ENCODE measurements at regions of chr5 and their contacts with region 1.

Region 1: DNA sequence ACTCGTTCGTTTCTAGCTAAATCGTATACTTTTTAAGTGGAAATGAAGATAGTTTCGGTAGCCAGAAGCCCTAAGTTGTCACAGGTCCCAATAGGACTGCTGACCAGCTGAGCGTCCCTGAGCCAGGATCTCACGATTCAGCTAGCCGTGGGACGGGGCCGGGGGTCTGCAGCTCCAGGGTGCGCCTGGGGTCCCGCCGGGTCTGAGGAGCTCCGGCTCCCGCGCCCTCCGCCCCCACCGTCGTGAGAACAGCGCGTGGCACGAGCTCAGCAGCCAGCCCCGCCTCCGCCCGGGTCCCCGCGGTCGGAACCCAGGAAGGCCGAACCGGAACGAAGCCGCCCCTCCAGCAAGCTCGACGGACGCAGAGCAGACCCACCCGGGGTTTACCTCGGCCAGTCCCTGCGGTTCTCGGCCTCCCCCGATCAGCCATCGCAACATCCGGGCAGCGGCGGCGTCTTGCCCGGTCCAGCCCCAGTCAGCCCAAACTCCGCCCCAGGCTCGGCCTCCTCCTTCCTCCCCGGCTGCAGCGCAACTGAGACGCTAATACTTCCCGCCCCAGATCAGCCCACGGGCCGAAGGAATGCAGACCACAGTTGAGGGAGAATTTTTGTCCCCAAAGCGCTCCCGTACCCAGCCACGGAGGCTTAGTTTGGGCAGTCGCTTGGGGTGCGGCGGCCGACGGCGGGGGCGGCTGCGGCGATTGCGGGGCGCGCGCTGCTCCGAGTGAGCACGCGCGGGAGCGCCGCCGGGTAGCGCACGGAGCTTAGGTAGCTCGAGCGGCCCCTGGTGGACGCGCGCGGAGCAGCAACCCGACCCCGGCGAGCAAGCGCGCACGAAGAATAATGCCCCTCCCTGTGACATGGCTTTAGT is at the start of gene WDR41:
- DNase-seq: peak; percentile 97
- ATAC-seq: peak; percentile 98
- H3K4me3 ChIP-seq: peak within 1 kb of the TSS; percentile 81 to 84
- H3K27ac ChIP-seq: peak within 1 kb of the TSS; percentile 77 to 98
- H3K4me1 ChIP-seq: no peaks in the 10 kb centered on the region
- H3K27me3 ChIP-seq: no peaks in the 10 kb centered on the region
- total RNA-seq, gene WDR41: 53.6 to 59.7 TPM

Region 2: GRCh38 chr5:76867827-76868693 is 624.0 kb before region 1 on chr5:
- intact Hi-C with region 1: loop called in 1 of 2 experiments (anchors 5 kb)
- DNase-seq: peak in 1 of 2 donors; percentile 59
- ATAC-seq: peak; percentile 69
- H3K4me3 ChIP-seq: no peak overlapping the region
- H3K27ac ChIP-seq: no peak overlapping the region
- H3K4me1 ChIP-seq: peaks cover 0 to 1% of the 10 kb centered on the region in 2 donors
- H3K27me3 ChIP-seq: no peaks in the 10 kb centered on the region

Region 3: GRCh38 chr5:77030097-77031071 is 461.6 kb before region 1 on chr5 and contains the start of gene AGGF1:
- intact Hi-C with region 1: loop called in 1 of 2 experiments (anchors 1 kb)
- DNase-seq: peak; percentile 97
- ATAC-seq: peak; percentile 97
- H3K4me3 ChIP-seq: peak within 1 kb of the TSS; percentile 61 to 93
- H3K27ac ChIP-seq: peak within 1 kb of the TSS; percentile 58 to 79
- H3K4me1 ChIP-seq: peaks cover 0 to 2% of the 10 kb centered on the region in 2 donors
- H3K27me3 ChIP-seq: no peaks in the 10 kb centered on the region
- total RNA-seq, gene AGGF1: 14.5 to 20.6 TPM

Region 4: DNA sequence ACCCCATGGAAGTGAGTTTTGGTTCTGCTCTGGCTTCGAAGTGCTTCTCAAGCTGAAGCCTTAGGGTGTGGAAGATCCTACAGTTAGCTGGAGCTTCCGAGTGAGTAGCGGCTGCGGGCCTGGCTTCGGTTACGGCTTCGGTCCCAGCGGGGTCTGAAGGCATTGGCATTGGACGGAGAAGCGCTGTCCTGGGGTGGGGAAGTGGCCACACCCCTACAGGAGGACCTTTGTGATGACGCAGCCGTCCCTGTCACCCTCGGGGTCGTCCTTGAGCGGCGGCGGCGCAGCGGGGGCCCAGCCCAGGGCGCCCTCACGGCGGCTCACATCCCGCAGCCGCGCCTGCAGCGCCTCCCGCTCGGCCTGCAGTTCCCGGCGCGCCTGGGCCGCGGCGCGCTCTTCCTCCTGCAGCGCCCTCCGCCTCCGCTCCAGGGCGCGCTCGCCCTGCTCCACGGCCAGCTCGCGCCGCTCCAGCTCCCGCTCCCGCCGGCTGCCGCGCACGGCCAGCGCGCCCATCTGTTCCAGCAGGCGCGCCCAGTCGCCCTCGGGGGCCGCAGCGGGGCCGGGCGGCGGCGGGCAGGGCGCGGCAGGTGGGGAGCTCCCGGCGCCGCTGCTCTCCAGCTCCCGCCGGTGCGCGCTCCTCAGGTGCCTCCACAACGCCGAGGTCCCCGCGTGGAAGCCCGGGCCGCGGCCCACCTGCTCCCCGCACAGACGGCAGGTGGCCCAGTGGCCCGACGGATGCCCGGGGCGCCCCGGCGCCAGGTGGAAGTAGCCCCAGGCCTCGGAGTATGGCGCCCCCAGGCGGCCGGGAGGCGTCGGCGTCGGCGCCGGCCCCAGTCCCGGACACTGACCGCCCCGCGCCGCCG is 414.8 kb before region 1 on chr5:
- intact Hi-C with region 1: loop called in 1 of 2 experiments (anchors 10 kb)
- DNase-seq: peak; percentile 79 to 92
- ATAC-seq: peak; percentile 91
- H3K4me3 ChIP-seq: peak overlapping the region in 1 of 2 donors; percentile 40
- H3K27ac ChIP-seq: no peak overlapping the region
- H3K4me1 ChIP-seq: no peaks in the 10 kb centered on the region
- H3K27me3 ChIP-seq: peaks cover 0 to 2% of the 10 kb centered on the region in 2 donors

Region 5: DNA sequence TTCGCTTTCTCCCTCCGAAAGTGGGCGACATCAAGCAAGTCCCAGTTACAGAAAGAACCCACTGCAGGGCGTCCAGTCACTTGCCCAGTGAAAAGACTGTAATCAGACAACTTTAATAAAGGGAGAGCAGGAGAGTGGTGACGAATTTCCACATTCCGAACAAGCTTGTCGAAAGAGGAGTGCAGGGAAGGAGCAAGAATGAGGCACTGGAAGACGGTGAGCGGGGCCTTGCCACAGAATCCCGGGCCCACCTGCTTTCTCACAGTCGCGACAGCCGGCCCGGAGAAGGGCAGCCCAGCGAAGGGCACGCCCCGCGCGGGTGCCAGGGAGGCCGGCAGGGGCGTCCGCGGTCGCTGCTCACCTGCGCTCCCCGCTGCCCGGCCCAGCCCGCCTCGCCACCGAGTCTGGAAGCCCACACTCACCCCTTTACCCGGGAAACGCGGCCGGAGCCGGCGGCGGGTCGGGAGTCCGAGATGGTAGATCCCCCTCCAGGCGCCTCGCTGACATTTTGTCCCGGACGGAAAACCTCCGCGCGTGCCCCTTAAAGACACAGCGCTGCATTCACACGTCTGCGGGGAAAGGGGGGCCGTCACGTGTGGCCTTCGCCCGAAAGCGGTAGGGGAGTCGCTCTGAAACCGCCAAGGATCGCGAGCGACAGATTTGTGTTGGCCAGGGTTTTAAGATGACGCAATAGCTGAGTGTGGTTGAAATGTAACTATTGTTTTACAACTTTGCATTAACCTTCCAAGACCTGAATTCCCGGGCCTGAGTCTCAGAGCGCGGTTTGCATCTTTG is 405.1 kb before region 1 on chr5 and contains the start of gene ZBED3:
- intact Hi-C with region 1: loop called in 1 of 2 experiments (anchors 5 kb)
- DNase-seq: peak; percentile 84 to 87
- ATAC-seq: peak; percentile 85
- H3K4me3 ChIP-seq: peak within 1 kb of the TSS; percentile 81 to 85
- H3K27ac ChIP-seq: peak within 1 kb of the TSS; percentile 87 to 96
- H3K4me1 ChIP-seq: no peaks in the 10 kb centered on the region
- H3K27me3 ChIP-seq: no peaks in the 10 kb centered on the region
- total RNA-seq, gene ZBED3: 11.3 to 11.7 TPM

Region 6: DNA sequence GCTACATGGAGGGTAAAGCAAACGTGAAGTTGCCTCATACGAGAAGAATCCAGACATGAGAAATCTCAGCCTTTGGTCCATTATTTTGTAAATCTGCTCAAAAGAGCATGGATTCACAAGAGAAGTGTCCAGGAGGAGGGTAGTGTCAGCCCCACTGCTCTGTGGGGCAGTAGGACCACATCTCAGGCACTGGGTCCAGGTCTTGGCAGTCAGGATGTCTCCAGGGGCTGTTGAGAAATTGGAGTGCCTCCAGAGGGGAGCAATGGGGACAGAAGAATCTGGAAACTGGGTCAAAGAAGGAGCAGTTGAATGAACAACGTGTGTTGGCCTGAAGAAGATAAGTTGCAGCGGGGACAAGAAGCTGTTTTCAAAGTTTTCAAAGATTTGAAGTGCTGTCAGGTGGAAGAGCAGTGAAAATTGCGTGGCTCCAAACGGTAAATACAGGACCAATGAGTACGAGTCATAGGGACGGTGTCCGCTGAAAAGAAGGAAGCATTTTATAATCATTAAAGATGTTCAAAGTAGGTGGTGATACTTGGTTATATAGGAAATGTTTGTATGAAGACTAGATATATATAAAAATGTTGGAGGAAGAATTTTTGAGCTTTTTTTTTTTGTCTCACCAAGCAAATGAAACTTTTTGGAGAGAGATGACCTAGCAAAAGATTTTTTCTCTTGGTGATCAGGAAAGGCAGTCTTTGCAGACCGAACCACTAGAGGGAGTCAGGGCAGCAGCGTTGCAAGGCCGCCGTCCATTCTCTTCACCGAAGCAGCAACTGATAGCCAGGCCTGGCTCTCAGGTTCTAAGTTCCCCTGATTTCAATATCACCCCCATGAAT is 347.8 kb before region 1 on chr5:
- intact Hi-C with region 1: loop called (anchors 1 to 5 kb)
- DNase-seq: peak; percentile 82 to 84
- ATAC-seq: peak; percentile 88
- H3K4me3 ChIP-seq: no peak overlapping the region
- H3K27ac ChIP-seq: no peak overlapping the region
- H3K4me1 ChIP-seq: no peaks in the 10 kb centered on the region
- H3K27me3 ChIP-seq: no peaks in the 10 kb centered on the region